ENCODE measurements at regions of chr3 and their contacts with region 1.

Region 1: GRCh38 chr3:107429320-107430181 is 52.3 kb downstream of the CCDC54 start:
- DNase-seq: peak; percentile 62
- H3K4me3 Mint-ChIP-seq: peak overlapping the region; percentile 73
- H3K27ac Mint-ChIP-seq: peak overlapping the region; percentile 16
- H3K4me1 Mint-ChIP-seq: peaks cover 19% of the 10 kb centered on the region
- H3K27me3 Mint-ChIP-seq: peaks cover 54% of the 10 kb centered on the region

Region 2: GRCh38 chr3:107235928-107236315 is 193.6 kb before region 1 on chr3:
- CTCF ChIA-PET with region 1: interaction called, 29 read pairs
- DNase-seq: peak; percentile 54
- H3K4me3 Mint-ChIP-seq: peak overlapping the region; percentile 61
- H3K27ac Mint-ChIP-seq: no peak overlapping the region
- H3K4me1 Mint-ChIP-seq: peaks cover 22% of the 10 kb centered on the region
- H3K27me3 Mint-ChIP-seq: peaks cover 28% of the 10 kb centered on the region

Region 3: GRCh38 chr3:107315141-107315540 is 114.4 kb before region 1 on chr3:
- CTCF ChIA-PET with region 1: no interaction called
- DNase-seq: no peak
- H3K4me3 Mint-ChIP-seq: no peak overlapping the region
- H3K27ac Mint-ChIP-seq: no peak overlapping the region
- H3K4me1 Mint-ChIP-seq: no peaks in the 10 kb centered on the region
- H3K27me3 Mint-ChIP-seq: peaks cover 14% of the 10 kb centered on the region

Region 4: GRCh38 chr3:107395066-107395465 is 34.5 kb before region 1 on chr3:
- CTCF ChIA-PET with region 1: no interaction called
- DNase-seq: no peak
- H3K4me3 Mint-ChIP-seq: no peak overlapping the region
- H3K27ac Mint-ChIP-seq: no peak overlapping the region
- H3K4me1 Mint-ChIP-seq: no peaks in the 10 kb centered on the region
- H3K27me3 Mint-ChIP-seq: peaks cover 3% of the 10 kb centered on the region

Region 5: DNA sequence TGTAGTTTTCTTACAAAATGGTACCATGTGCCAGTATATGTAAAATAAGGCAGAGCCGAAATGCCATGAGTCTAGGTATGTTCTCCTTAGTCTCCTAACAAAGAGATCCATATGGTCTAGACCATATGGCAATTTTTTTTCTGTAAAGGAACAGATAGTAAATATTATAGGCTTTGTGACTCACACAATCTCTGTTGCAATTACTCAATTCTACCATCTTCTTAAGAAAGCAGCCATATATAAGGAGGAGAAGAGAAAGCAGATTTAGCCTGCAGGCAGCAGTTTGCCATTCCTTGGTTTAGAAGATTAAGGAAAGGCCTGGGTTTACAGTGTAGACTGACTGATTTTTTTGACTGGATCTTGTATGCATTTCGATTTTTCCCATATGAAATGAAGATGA is 76.9 kb after region 1 on chr3:
- CTCF ChIA-PET with region 1: no interaction called
- DNase-seq: no peak
- H3K4me3 Mint-ChIP-seq: no peak overlapping the region
- H3K27ac Mint-ChIP-seq: no peak overlapping the region
- H3K4me1 Mint-ChIP-seq: no peaks in the 10 kb centered on the region
- H3K27me3 Mint-ChIP-seq: no peaks in the 10 kb centered on the region

Measured in activated naive CD4-positive, alpha-beta T cell treated with anti-CD3 and anti-CD28 coated beads, Interleukin-2, amount 10 ng/mL, durations not matched to agents 7 days and 5 days (primary cell).